MCF 10A (cell line): ENCODE measurements at regions of chr2 and their contacts with region 1.

Region 1: GRCh38 chr2:94956797-94957391 is 68.6 kb upstream of the MAL start:
- DNase-seq: peak; percentile 59
- H3K4me3 Mint-ChIP-seq: no peak overlapping the region
- H3K27ac Mint-ChIP-seq: no peak overlapping the region
- H3K4me1 Mint-ChIP-seq: no peaks in the 10 kb centered on the region
- H3K27me3 Mint-ChIP-seq: peaks cover 72% of the 10 kb centered on the region
- CTCF ChIP-seq: peak; percentile 86

Region 2: DNA sequence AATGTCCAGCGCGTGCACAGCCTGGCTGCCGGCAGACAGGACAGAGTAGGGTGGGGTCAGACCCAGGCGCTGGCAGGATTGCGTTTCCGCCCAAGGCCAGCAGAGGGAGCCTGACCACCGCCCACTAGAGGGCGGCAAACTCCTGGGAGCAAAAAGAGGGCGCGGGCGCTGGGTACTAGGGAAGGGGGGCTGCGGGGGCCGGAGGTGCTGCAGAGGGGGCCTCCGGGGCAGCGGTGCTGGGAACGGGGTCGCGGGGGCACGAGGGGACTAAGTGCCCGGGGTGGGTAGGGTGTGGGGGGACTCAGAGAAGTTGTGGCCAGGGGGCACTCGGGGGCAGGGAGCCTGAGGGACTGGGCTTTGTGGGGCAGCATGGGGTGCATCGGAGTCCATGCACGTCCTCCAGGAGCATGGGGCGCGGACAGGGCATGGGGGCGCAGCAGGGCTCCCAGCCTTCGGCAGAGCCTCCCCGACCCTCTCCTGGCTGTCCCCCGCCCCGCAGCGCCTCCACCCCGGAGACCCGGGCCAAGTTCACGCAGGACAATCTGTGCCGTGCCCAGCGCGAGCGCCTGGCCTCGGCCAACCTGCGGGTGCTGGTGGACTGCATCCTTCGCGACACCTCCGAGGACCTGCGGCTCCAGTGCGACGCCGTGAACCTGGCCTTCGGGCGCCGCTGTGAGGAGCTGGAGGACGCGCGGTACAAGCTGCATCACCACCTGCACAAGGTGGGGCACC is 82.5 kb before region 1 on chr2:
- CTCF ChIA-PET with region 1: interaction called, 170 read pairs
- POLR2A ChIA-PET with region 1: no interaction called
- intact Hi-C with region 1: loop called (anchors 1 kb)
- DNase-seq: peak; percentile 50
- H3K4me3 Mint-ChIP-seq: no peak overlapping the region
- H3K27ac Mint-ChIP-seq: no peak overlapping the region
- H3K4me1 Mint-ChIP-seq: no peaks in the 10 kb centered on the region
- H3K27me3 Mint-ChIP-seq: peaks cover 11% of the 10 kb centered on the region
- CTCF ChIP-seq: peak; percentile 97

Region 3: GRCh38 chr2:94923196-94923595 is 33.7 kb before region 1 on chr2:
- CTCF ChIA-PET with region 1: interaction called, 10 read pairs
- POLR2A ChIA-PET with region 1: no interaction called
- intact Hi-C with region 1: no loop called
- DNase-seq: peak; percentile 18
- H3K4me3 Mint-ChIP-seq: no peak overlapping the region
- H3K27ac Mint-ChIP-seq: no peak overlapping the region
- H3K4me1 Mint-ChIP-seq: no peaks in the 10 kb centered on the region
- H3K27me3 Mint-ChIP-seq: peaks cover 39% of the 10 kb centered on the region
- CTCF ChIP-seq: no peak

Region 4: GRCh38 chr2:94939349-94939748 is 17.5 kb before region 1 on chr2:
- CTCF ChIA-PET with region 1: interaction called, 16 read pairs
- POLR2A ChIA-PET with region 1: interaction called, 3 read pairs
- intact Hi-C with region 1: no loop called
- DNase-seq: no peak
- H3K4me3 Mint-ChIP-seq: no peak overlapping the region
- H3K27ac Mint-ChIP-seq: no peak overlapping the region
- H3K4me1 Mint-ChIP-seq: no peaks in the 10 kb centered on the region
- H3K27me3 Mint-ChIP-seq: peaks cover 98% of the 10 kb centered on the region
- CTCF ChIP-seq: no peak

Region 5: DNA sequence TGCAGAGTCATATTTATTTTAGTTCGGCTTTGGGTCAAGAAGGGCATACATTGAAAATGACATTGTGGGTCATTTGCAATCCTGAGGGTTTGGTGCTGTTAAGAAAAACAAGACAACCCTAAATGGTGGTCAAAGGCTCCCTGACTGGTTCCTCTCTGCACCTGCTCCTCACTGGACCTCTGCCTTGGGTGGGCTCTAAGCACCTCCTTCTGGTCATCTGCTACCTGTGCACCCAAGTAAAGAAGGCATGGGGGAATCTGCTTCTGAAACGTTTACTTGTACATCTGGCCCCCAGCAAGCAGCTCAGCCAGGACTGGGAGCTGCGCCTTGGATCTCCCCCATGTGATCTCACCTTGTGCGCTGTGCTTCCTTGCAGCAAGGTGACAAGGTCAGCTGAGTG is 13.5 kb after region 1 on chr2:
- CTCF ChIA-PET with region 1: interaction called, 30 read pairs
- POLR2A ChIA-PET with region 1: no interaction called
- intact Hi-C with region 1: no loop called
- DNase-seq: no peak
- H3K4me3 Mint-ChIP-seq: no peak overlapping the region
- H3K27ac Mint-ChIP-seq: no peak overlapping the region
- H3K4me1 Mint-ChIP-seq: no peaks in the 10 kb centered on the region
- H3K27me3 Mint-ChIP-seq: peaks cover 98% of the 10 kb centered on the region
- CTCF ChIP-seq: no peak

Region 6: GRCh38 chr2:94986392-94986963 is 29.6 kb after region 1 on chr2:
- CTCF ChIA-PET with region 1: interaction called, 12 read pairs
- POLR2A ChIA-PET with region 1: no interaction called
- intact Hi-C with region 1: no loop called
- DNase-seq: peak; percentile 64
- H3K4me3 Mint-ChIP-seq: no peak overlapping the region
- H3K27ac Mint-ChIP-seq: no peak overlapping the region
- H3K4me1 Mint-ChIP-seq: no peaks in the 10 kb centered on the region
- H3K27me3 Mint-ChIP-seq: peaks cover 56% of the 10 kb centered on the region
- CTCF ChIP-seq: peak; percentile 68

Region 7: DNA sequence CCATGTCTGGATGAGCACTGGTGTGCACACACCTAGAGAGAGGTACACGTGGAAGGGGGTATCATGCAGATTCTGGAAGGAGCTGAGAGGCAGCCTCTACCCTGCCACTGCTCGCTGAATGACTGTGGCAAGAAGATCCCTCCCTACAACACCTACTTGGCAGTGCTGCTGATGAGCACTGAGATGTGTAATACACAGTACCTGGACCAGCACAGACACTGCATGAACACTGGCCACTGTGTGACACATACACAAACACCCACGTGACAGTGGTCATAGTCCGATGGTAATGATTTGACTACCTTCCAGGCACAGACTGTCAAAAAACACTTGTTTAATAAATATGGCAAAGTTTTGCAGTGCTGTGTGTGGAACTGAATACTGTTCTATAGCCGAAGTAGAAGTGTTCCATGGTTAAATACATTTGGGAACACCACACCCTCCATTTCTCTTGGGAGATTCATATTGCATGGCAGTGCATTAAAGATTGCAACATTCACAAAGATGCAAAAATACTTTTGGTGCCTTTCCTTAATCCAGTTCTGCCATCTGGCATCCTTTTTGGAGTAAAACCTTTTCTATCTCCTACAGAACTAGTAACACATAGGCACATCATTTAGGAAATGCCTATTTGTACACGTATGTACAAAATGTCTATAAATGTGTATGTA is 135.1 kb after region 1 on chr2:
- CTCF ChIA-PET with region 1: no interaction called
- POLR2A ChIA-PET with region 1: no interaction called
- intact Hi-C with region 1: no loop called
- DNase-seq: no peak
- H3K4me3 Mint-ChIP-seq: no peak overlapping the region
- H3K27ac Mint-ChIP-seq: no peak overlapping the region
- H3K4me1 Mint-ChIP-seq: no peaks in the 10 kb centered on the region
- H3K27me3 Mint-ChIP-seq: no peaks in the 10 kb centered on the region
- CTCF ChIP-seq: no peak

Region 8: DNA sequence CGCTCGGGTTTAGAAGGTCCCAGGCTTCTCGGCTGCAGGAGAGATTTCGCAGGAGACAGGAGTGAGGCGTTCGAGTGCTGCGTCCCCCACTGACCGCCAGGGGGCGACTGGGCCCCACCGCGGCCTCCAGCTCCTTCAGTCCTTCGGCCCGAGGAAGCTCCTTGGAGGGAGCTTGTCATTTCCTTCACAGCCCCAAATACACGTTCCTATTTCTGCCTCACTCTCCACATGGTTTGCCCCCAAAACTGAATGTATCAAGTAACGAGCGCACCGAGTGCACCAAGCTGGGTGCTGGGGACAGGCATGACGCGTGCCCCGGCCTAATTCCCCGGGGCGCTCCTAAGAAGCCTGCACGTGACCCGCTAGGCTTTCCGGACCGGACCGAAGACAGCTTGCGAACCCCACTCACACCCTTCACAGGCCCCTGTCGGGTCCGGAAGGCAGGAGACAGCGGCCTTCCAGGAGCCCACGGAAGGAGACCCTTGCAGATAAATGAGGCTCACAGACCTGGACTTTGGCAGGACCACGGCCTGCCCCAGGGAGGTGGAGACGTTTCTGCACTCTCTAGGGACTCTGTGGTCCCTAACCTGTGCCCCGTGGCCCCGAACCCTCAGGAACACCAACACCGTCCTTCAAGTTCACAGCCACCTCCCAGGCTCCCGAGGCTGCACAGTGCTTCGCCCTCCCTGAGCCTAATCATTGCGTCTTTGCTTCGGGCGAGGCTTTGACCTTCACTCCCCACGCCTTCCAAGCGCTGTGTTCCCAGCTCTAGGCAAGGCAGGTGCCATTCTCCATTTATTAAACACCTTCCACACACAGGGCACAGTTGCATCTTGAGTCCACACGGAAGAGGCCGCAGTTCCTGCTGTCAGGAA is 432.6 kb after region 1 on chr2:
- CTCF ChIA-PET with region 1: no interaction called
- POLR2A ChIA-PET with region 1: no interaction called
- intact Hi-C with region 1: no loop called
- DNase-seq: peak; percentile 73
- H3K4me3 Mint-ChIP-seq: no peak overlapping the region
- H3K27ac Mint-ChIP-seq: no peak overlapping the region
- H3K4me1 Mint-ChIP-seq: peaks cover 7% of the 10 kb centered on the region
- H3K27me3 Mint-ChIP-seq: no peaks in the 10 kb centered on the region
- CTCF ChIP-seq: peak; percentile 90